ENCODE measurements at regions of chr14 and their contacts with region 1.

Region 1: GRCh38 chr14:52124791-52125661 is 56.2 kb upstream of the NID2 start:
- DNase-seq: peak in 1 of 42 donors; percentile 30

Region 2: GRCh38 chr14:51989293-51990234 is 135.5 kb before region 1 on chr14 and contains the start of gene RTRAF:
- intact Hi-C with region 1: loop called (anchors 10 kb)
- DNase-seq: peak; percentile 90 to 98 (median 97)

Region 3: GRCh38 chr14:52043690-52044089 is 81.3 kb before region 1 on chr14:
- intact Hi-C with region 1: no loop called
- DNase-seq: peak in 3 of 42 donors; percentile 19 to 35 (median 32)

Region 4: DNA sequence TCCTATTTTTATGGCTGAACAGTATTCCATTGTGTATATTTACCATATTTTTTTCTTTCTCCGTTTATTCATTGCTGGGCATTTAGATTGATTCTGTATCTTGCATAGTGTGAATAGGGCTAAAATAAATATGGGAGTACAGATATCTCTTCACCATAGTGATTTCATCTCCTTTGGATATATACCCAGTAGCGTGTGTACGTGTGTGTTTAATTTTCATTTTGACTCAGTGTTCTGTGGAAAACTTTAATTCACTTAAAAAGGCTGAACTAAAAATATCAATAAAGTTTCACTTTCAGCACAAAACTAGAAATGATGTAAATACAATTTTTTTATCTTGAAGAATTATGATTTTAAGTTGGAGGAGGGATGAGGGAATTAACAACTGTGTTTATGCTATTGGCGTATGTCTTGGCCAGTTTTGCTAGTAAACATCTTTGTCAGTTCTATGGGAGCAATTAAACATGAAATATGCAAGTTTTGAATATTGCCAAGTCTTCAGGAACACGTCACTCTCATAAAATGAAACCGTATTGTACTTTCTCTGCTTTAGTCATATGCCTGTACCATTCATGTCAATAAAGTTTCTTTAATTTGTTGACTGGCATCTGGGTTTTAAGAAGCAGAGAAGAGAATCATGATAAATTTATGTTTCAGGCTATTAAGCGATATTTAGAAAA is 288.8 kb after region 1 on chr14:
- intact Hi-C with region 1: no loop called
- DNase-seq: no peak